Activated CD4-positive, alpha-beta T cell treated with anti-CD3 and anti-CD28 coated beads for 36 hours (primary cell): ENCODE measurements at regions of chr3 and their contacts with region 1.

Region 1: GRCh38 chr3:45864760-45865519 is 21.4 kb upstream of the CCR9 start:
- DNase-seq: peak; percentile 55
- ATAC-seq: peak; percentile 71
- H3K4me3 Mint-ChIP-seq: no peak overlapping the region
- H3K27ac Mint-ChIP-seq: no peak overlapping the region
- H3K4me1 Mint-ChIP-seq: peaks cover 46% of the 10 kb centered on the region
- H3K27me3 Mint-ChIP-seq: peaks cover 52% of the 10 kb centered on the region

Region 2: DNA sequence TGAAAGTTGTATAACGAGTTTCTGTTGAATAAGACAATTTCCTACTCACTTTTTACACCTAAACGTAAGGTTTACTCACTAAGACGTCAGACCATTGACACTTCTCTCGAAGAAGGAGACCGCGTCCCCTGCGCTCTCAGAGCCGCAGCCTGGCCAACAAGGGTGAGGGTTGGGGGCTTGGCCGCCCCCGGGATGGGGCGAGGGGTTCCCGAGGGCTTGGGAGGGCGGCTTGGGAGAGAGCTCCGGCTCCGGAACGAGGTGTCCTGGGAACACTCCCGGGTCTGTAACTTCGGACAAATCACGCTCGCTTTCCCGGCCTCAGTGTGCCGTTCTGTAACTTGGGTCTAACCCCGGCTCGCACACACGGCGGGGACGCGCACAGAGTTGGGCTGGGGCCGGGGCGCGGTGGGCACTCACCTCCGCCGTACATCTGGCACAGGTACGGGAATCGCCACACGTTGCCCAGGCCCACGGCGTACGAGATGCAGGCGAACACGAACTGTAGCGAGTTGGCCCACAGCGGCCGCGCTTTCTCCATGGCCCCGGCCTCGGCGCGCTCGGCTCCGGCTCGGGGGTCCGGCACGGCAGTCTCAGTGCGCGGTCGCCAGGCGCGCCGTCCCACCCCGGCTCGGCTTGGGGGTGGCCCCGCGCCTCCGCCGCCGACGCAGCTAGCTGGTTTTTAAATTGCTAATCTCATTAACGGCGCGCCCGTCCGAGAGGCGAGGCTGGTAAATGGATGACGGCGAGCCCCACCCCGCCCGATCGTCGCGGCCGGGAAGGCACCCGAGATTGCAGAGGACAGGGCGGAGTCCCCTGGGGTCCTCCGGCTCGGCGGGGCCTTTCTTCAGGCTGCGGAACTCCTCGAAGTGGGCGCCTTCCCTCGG is 68.8 kb before region 1 on chr3 and contains the start of gene SLC6A20:
- CTCF ChIA-PET with region 1: no interaction called
- POLR2A ChIA-PET with region 1: no interaction called
- intact Hi-C with region 1: loop called in 1 of 2 experiments (anchors 5 kb)
- DNase-seq: peak; percentile 25
- ATAC-seq: peak; percentile 39
- H3K4me3 Mint-ChIP-seq: peak within 1 kb of the TSS; percentile 50
- H3K27ac Mint-ChIP-seq: no peak within 1 kb of the TSS
- H3K4me1 Mint-ChIP-seq: peaks cover 4% of the 10 kb centered on the region
- H3K27me3 Mint-ChIP-seq: peaks cover 52% of the 10 kb centered on the region
- total RNA-seq, gene SLC6A20: not detected

Region 3: DNA sequence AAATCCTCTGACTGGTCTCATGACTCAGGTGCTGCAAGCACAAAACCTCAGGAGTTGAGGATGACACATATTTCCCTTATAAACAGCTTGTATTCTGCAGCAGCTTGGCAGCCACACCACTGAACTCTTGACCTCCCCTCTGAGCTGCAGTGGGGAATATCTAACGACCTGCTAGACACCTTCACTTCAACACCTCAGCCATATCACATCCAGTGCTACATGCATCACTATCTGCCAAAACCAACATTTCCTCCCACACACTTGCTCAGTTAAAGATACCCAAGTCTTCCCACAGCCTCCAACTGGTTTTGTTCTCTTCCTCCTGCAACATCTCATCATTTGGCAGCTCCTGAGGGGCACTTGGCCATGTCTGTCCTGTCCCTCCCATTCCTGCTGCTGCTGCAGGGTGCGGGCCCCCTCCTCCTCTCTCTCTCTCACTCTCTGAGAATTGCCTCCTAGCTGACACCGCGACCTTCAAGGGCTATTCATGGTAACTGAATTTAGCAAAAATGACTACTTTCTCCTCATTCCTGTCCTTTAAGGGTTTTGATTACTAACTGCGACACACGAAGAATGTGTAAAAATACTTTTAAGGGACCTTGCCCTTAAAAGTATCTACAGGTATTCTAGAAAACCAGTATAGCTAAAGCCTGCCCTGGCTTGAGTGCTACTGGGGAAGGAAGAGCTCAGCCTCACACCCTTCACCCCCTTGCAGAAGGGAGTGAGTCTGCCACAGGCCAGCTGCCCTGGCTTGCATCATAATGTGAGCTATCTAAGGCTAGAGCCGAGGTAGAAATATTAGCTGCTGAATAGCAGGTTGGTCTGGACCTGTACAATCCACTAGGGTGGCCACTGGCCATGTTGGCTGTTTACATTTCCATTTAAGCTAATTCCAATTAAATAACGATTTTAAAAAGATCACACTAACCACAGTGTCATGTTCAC is 16.4 kb after region 1 on chr3:
- CTCF ChIA-PET with region 1: interaction called, 5 read pairs
- POLR2A ChIA-PET with region 1: interaction called, 6 read pairs
- intact Hi-C with region 1: loop called (anchors 1 to 2 kb)
- DNase-seq: peak; percentile 63
- ATAC-seq: peak; percentile 92
- H3K4me3 Mint-ChIP-seq: no peak overlapping the region
- H3K27ac Mint-ChIP-seq: peak overlapping the region; percentile 2
- H3K4me1 Mint-ChIP-seq: peaks cover 27% of the 10 kb centered on the region
- H3K27me3 Mint-ChIP-seq: peaks cover 40% of the 10 kb centered on the region

Region 4: DNA sequence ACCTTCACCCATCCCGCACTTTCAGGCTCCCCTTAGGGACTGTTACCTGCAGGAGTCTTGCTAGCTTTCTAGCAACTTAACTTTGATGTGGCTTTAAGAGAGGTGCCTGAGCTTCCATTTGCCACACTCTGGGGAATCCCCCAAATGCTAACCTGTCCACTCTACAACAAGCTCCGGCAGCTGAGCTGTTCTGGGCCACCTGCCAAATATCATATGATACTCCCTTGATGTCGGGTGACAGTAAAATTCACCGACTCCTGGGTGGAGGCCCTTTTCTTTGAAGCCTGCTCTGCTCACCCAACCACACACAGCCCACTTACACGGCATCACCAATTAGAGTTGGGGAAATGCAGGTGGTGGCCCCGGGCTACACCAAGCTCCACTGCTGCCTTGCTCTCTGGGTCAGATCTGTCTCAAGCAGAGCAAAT is 200.4 kb after region 1 on chr3:
- CTCF ChIA-PET with region 1: interaction called, 3 read pairs
- POLR2A ChIA-PET with region 1: no interaction called
- intact Hi-C with region 1: loop called (anchors 1 to 5 kb)
- DNase-seq: peak; percentile 83
- ATAC-seq: peak; percentile 92
- H3K4me3 Mint-ChIP-seq: no peak overlapping the region
- H3K27ac Mint-ChIP-seq: no peak overlapping the region
- H3K4me1 Mint-ChIP-seq: peaks cover 68% of the 10 kb centered on the region
- H3K27me3 Mint-ChIP-seq: peaks cover 57% of the 10 kb centered on the region

Region 5: GRCh38 chr3:46378426-46378942 is 513.5 kb after region 1 on chr3:
- CTCF ChIA-PET with region 1: no interaction called
- POLR2A ChIA-PET with region 1: no interaction called
- intact Hi-C with region 1: loop called in 1 of 2 experiments (anchors 10 kb)
- DNase-seq: peak; percentile 84
- ATAC-seq: peak; percentile 53
- H3K4me3 Mint-ChIP-seq: no peak overlapping the region
- H3K27ac Mint-ChIP-seq: no peak overlapping the region
- H3K4me1 Mint-ChIP-seq: peaks cover 28% of the 10 kb centered on the region
- H3K27me3 Mint-ChIP-seq: peaks cover 22% of the 10 kb centered on the region

Region 6: GRCh38 chr3:47578691-47579632 is 1714.0 kb after region 1 on chr3 and contains the start of gene CSPG5:
- CTCF ChIA-PET with region 1: no interaction called
- POLR2A ChIA-PET with region 1: no interaction called
- intact Hi-C with region 1: no loop called
- DNase-seq: peak; percentile 46
- ATAC-seq: peak; percentile 58
- H3K4me3 Mint-ChIP-seq: peak within 1 kb of the TSS; percentile 52
- H3K27ac Mint-ChIP-seq: no peak within 1 kb of the TSS
- H3K4me1 Mint-ChIP-seq: no peaks in the 10 kb centered on the region
- H3K27me3 Mint-ChIP-seq: peaks cover 16% of the 10 kb centered on the region
- total RNA-seq, gene CSPG5: 0.78 to 0.97 TPM